Activated naive CD4-positive, alpha-beta T cell treated with anti-CD3 and anti-CD28 coated beads, Interleukin-2, amount 10 ng/mL, durations not matched to agents 7 days and 5 days (primary cell): ENCODE measurements at regions of chr3 and their contacts with region 1.

Region 1: GRCh38 chr3:151199554-151200438 is 3.2 kb downstream of the GPR171 start:
- DNase-seq: no peak
- H3K4me3 Mint-ChIP-seq: peak overlapping the region; percentile 88
- H3K27ac Mint-ChIP-seq: peak overlapping the region; percentile 98
- H3K4me1 Mint-ChIP-seq: peaks cover 46% of the 10 kb centered on the region
- H3K27me3 Mint-ChIP-seq: no peaks in the 10 kb centered on the region

Region 2: DNA sequence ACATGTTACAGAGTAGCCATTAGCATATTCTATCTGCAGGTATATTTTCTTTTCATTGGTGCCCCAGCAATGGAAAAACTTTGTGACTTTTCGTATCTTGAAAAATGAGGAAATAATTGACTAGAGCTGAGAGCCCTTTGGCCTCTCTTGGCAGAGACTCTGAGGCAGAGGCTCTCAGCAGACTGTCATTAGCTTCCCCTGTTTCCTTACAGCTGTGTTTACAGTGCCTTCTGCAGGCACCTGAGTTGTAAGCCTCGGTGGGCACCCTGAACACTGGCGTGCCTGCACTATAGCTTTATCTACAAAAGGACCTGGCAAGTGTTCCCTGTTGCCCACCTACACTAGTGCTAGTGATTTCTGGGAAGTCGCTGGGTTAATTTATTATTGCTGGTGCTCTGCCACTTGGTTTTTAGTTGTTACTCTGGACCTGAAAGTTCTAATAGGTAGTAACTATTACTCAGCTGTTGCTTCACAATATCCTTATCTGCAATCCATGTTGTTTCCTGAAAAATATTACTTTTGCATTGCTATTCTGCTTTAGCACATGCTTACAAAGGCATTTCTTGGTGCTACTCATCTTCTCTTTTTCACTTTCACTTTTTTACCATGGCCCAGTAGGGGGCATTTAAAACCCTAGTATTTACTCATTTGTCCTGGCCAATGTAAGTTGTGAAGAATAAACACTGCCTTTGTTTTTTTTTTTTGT is 11.0 kb after region 1 on chr3:
- CTCF ChIA-PET with region 1: interaction called, 15 read pairs
- DNase-seq: peak; percentile 43
- H3K4me3 Mint-ChIP-seq: peak overlapping the region; percentile 61
- H3K27ac Mint-ChIP-seq: peak overlapping the region; percentile 89
- H3K4me1 Mint-ChIP-seq: peaks cover 59% of the 10 kb centered on the region
- H3K27me3 Mint-ChIP-seq: peaks cover 6% of the 10 kb centered on the region